WTC11 (cell line): ENCODE measurements at regions of chr1 and their contacts with region 1.

Region 1: DNA sequence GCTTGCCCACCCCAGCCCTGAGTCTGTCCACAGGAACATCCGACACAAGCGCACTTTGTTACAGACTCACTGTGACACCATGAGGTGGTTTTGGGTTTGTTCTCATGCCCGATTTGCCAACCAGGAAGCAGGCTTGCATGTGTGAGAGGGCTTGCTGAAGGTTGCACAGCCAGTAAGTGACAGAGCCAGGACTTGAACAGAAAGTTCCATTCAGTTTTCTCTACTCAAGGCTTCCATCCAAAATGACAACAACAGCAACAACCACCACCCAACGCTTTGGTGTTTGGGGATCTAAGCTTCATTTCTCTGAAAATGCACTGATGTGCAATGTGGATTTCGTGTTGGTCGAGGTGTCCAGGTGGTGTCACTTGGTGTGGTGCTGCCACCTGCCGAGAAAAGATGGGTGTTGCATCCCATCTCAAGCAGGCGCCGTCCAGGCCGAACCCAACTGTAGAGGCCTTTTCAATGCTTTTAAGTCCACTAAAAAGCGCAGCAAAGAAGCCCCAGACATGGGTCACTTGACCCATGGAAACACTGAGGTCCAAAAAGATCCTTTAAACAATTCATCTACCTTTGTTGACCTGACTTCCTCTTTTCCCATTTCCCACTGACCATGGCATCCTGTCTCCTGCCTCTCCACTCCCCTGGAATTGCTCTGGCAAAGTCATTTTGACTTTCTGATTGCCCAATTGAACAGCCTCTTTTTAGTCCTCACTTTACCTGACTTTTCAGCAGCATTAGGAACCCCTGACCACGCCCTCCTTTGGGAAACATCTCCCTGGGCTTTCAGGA is 12.2 kb downstream of the CITED4 start:
- DNase-seq: peak; percentile 77
- ATAC-seq: peak; percentile 71
- H3K4me3 Mint-ChIP-seq: no peak overlapping the region
- H3K27ac Mint-ChIP-seq: no peak overlapping the region
- H3K4me1 Mint-ChIP-seq: peaks cover 10% of the 10 kb centered on the region
- H3K27me3 Mint-ChIP-seq: no peaks in the 10 kb centered on the region
- CTCF ChIP-seq: peak; percentile 91

Region 2: GRCh38 chr1:40783001-40783905 is 66.7 kb before region 1 on chr1 and contains the start of gene KCNQ4:
- CTCF ChIA-PET with region 1: interaction called, 18 read pairs
- POLR2A ChIA-PET with region 1: no interaction called
- DNase-seq: peak; percentile 68
- ATAC-seq: peak; percentile 20
- H3K4me3 Mint-ChIP-seq: peak within 1 kb of the TSS; percentile 86
- H3K27ac Mint-ChIP-seq: no peak within 1 kb of the TSS
- H3K4me1 Mint-ChIP-seq: peaks cover 32% of the 10 kb centered on the region
- H3K27me3 Mint-ChIP-seq: peaks cover 53% of the 10 kb centered on the region
- CTCF ChIP-seq: no peak
- total RNA-seq, gene KCNQ4: 3.3 to 4.0 TPM (median 3.6 TPM) in 3 replicates

Region 3: GRCh38 chr1:40838045-40838979 is 11.7 kb before region 1 on chr1:
- CTCF ChIA-PET with region 1: interaction called, 16 read pairs
- POLR2A ChIA-PET with region 1: no interaction called
- DNase-seq: peak; percentile 73
- ATAC-seq: peak; percentile 84
- H3K4me3 Mint-ChIP-seq: no peak overlapping the region
- H3K27ac Mint-ChIP-seq: no peak overlapping the region
- H3K4me1 Mint-ChIP-seq: peaks cover 6% of the 10 kb centered on the region
- H3K27me3 Mint-ChIP-seq: no peaks in the 10 kb centered on the region
- CTCF ChIP-seq: no peak

Region 4: DNA sequence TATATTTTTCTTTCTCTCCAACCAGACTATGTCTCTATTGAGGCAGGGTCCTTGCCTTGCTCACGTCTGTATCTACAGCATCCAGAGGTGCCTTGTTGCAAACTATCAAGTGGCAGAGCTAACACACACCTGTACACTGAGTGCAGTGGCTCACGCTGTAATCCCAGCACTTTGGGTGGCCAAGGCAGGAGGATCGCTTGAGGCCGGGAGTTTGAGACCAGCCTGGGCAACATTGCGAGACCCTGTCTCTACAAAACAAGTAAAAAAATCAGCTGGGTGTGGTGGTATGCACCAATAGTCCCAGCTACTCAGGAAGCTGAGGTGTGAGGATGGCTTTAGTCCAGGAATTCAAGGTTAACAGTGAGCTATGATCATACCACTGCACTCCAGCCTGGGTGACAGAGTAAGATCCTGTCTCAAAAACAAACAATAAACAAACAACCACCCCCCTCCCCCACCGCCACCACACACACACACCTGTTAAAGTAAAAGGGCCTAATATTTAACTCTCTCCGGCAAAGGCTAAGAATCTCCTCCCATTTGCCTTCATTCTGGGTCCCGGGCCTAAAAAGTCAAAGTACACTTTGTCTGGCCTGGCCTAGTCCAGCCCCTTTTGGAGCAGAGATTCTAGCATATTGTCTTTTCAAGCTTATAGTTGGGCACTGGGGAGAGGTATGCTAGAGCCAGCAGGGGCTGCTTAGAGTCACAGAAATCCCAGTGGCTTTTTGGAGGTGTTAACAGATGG is 181.0 kb after region 1 on chr1:
- CTCF ChIA-PET with region 1: no interaction called
- POLR2A ChIA-PET with region 1: no interaction called
- DNase-seq: no peak
- ATAC-seq: no peak
- H3K4me3 Mint-ChIP-seq: no peak overlapping the region
- H3K27ac Mint-ChIP-seq: no peak overlapping the region
- H3K4me1 Mint-ChIP-seq: peaks cover 19% of the 10 kb centered on the region
- H3K27me3 Mint-ChIP-seq: peaks cover 8% of the 10 kb centered on the region; the same call in 1 of the 2 replicates
- CTCF ChIP-seq: no peak